ENCODE measurements at regions of chr3 and their contacts with region 1.

Region 1: GRCh38 chr3:183937610-183938230 is 53.0 kb upstream of the PARL start:
- DNase-seq: no peak
- H3K4me3 ChIP-seq: no peak overlapping the region
- H3K27ac ChIP-seq: no peak overlapping the region
- H3K4me1 ChIP-seq: no peaks in the 10 kb centered on the region
- H3K27me3 ChIP-seq: no peaks in the 10 kb centered on the region
- CTCF ChIP-seq: no peak

Region 2: GRCh38 chr3:183794452-183794851 is 143.3 kb before region 1 on chr3:
- CTCF ChIA-PET with region 1: no interaction called
- POLR2A ChIA-PET with region 1: no interaction called
- intact Hi-C with region 1: no loop called
- DNase-seq: no peak
- H3K4me3 ChIP-seq: no peak overlapping the region
- H3K27ac ChIP-seq: no peak overlapping the region
- H3K4me1 ChIP-seq: no peaks in the 10 kb centered on the region
- H3K27me3 ChIP-seq: no peaks in the 10 kb centered on the region
- CTCF ChIP-seq: no peak

Region 3: GRCh38 chr3:184174646-184175492 is 237.1 kb after region 1 on chr3 and contains the start of gene AP2M1:
- CTCF ChIA-PET with region 1: no interaction called
- POLR2A ChIA-PET with region 1: interaction called, 10 read pairs
- intact Hi-C with region 1: no loop called
- DNase-seq: peak; percentile 99
- H3K4me3 ChIP-seq: peak within 1 kb of the TSS; percentile 95
- H3K27ac ChIP-seq: peak within 1 kb of the TSS; percentile 89
- H3K4me1 ChIP-seq: peaks cover 9% of the 10 kb centered on the region
- H3K27me3 ChIP-seq: no peaks in the 10 kb centered on the region
- CTCF ChIP-seq: no peak; the same call in 1 of the 2 replicates
- total RNA-seq, gene AP2M1: 382 and 419 TPM in 2 replicates

Measured in A673 (cell line).